ENCODE measurements at regions of chr7 and their contacts with region 1.

Region 1: GRCh38 chr7:774161-775109 is 47.4 kb upstream of the PRKAR1B start:
- DNase-seq: no peak
- H3K4me3 ChIP-seq: no peak overlapping the region
- H3K27ac ChIP-seq: no peak overlapping the region
- H3K27me3 ChIP-seq: no peaks in the 10 kb centered on the region
- CTCF ChIP-seq: peak; percentile 87

Region 2: DNA sequence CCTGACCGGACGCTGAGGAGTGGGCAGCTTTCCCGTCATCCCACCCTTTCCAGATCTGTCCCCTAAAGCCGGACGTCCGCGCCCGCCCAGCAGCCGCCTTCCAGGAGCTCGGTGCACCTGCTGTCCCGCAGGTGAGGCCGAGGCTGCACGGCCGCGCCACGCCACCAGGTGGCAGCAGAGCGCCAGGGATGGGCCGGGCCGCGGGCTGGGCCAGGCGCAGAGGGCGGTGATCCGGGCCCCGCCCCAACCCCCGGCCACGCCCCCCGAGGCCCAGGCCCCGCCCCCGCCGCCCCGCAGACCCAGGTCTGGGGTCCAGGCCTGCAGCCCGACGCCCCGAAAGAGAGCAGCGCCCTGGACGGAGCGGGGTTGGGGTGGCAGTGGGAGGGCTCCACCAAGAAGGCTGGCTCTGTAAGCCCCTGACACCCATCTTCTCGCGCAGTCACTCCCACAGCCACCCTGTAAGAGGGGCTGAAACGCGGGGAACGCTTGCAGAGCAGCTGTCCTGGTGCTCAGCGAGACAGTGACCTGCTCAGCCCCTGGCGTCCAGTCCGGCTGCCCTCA is 452.2 kb before region 1 on chr7:
- CTCF ChIA-PET with region 1: interaction called, 12 read pairs
- POLR2A ChIA-PET with region 1: no interaction called
- DNase-seq: no peak
- H3K4me3 ChIP-seq: no peak overlapping the region
- H3K27ac ChIP-seq: no peak overlapping the region
- H3K27me3 ChIP-seq: peaks cover 20% of the 10 kb centered on the region
- CTCF ChIP-seq: peak; percentile 71

Region 3: GRCh38 chr7:518630-519483 is 255.6 kb before region 1 on chr7:
- CTCF ChIA-PET with region 1: no interaction called
- POLR2A ChIA-PET with region 1: no interaction called
- DNase-seq: no peak
- H3K4me3 ChIP-seq: peak overlapping the region; percentile 61
- H3K27ac ChIP-seq: no peak overlapping the region
- H3K27me3 ChIP-seq: peaks cover 35% of the 10 kb centered on the region
- CTCF ChIP-seq: no peak